Panc1 (cell line): ENCODE measurements at regions of chr11 and their contacts with region 1.

Region 1: DNA sequence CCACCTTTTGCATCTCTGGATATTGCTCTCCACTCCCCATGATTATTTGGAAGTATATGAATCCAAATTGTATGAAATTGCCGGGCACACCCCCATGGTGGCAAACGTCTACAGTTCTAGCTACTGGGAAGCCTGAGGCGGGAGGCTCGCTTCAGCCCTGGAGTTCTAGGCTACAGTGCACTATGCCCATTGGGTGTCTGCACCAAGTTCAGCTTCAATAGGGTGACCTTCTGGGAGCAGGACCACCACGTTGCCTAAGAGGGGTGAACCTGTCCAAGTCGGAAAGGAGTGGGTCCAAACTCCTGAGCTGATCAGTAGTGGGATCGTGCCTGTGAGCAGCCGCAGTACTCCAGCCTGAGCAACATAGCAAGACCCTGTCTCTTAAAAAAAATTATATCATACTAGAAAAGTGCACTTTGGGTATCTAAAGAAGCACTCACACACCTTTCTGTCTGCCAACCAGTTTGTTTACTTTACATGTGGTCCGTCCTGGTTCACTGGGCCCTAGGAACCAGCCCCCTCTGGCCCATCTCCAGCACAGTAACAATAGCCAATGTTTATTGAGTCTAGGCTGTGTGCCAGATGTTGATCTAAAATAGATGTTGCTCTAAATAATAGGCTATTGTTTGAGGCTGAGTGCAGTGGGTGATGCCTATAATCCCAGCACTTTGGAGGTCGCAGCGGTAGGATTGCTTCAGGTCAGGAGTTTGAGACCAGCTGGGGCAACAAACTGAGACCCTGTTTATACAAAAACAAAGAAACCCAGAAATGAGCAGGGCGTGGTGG is 16.4 kb upstream of the KAT5 start:
- DNase-seq: no peak
- ATAC-seq: peak; percentile 47; the same call in 1 of the 2 replicates
- H3K4me3 ChIP-seq: no peak overlapping the region
- H3K27ac ChIP-seq: no peak overlapping the region
- H3K4me1 ChIP-seq: peaks cover 11% of the 10 kb centered on the region
- H3K27me3 ChIP-seq: no peaks in the 10 kb centered on the region
- CTCF ChIP-seq: no peak

Region 2: GRCh38 chr11:65206441-65207266 is 489.0 kb before region 1 on chr11:
- CTCF ChIA-PET with region 1: no interaction called
- POLR2A ChIA-PET with region 1: interaction called, 13 read pairs
- in situ Hi-C with region 1: no loop called
- intact Hi-C with region 1: no loop called
- DNase-seq: no peak
- ATAC-seq: no peak
- H3K4me3 ChIP-seq: no peak overlapping the region
- H3K27ac ChIP-seq: no peak overlapping the region
- H3K4me1 ChIP-seq: no peaks in the 10 kb centered on the region
- H3K27me3 ChIP-seq: no peaks in the 10 kb centered on the region
- CTCF ChIP-seq: no peak

Region 3: DNA sequence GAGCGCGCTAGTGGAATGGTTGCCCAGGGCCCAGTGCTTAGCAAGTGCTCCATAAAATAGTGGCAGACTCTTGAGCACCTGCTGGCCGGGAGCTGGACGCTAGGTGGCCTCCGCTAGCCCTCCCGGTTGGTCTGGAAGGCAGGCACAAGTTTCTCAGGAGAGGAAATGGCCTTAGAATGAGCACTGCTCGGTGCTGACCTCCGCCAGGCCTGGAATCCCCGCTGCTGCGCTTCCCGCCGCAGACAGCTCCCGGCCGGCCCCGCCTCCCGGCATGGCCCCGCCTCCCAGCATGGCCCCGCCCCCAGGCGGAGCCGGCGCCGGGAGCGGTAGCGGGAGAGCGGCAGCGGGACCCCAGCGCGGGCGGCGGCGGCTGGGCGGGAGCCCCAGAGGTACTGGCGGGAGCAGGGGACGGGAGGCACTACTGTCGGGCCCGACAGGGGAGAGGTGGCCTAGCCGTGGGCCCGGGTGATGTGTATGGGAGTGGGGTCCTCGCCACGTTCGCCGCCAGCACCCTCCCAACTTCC is 57.8 kb before region 1 on chr11 and contains the start of gene SIPA1:
- CTCF ChIA-PET with region 1: no interaction called
- POLR2A ChIA-PET with region 1: no interaction called
- in situ Hi-C with region 1: no loop called
- intact Hi-C with region 1: loop called (anchors 10 kb)
- DNase-seq: peak; percentile 69
- ATAC-seq: peak; percentile 90
- H3K4me3 ChIP-seq: peak within 1 kb of the TSS; percentile 79 to 83
- H3K27ac ChIP-seq: peak within 1 kb of the TSS; percentile 91
- H3K4me1 ChIP-seq: peaks cover 24% of the 10 kb centered on the region
- H3K27me3 ChIP-seq: no peaks in the 10 kb centered on the region
- CTCF ChIP-seq: no peak; the same call in 1 of the 2 replicates
- total RNA-seq, gene SIPA1: 86.9 TPM